Psoas muscle (tissue), 8 donors: ENCODE measurements at regions of chr20 and their contacts with region 1.

Region 1: GRCh38 chr20:7171911-7172310 is 404.4 kb downstream of the BMP2 start:
- DNase-seq: no peak
- ATAC-seq: no peak
- H3K4me3 ChIP-seq: no peak overlapping the region
- H3K27ac ChIP-seq: no peak overlapping the region
- H3K4me1 ChIP-seq: no peaks in the 10 kb centered on the region
- H3K27me3 ChIP-seq: no peaks in the 10 kb centered on the region
- CTCF ChIP-seq: no peak

Region 2: GRCh38 chr20:7505152-7505834 is 333.4 kb after region 1 on chr20:
- intact Hi-C with region 1: loop called in 1 of 2 experiments (anchors 5 kb)
- DNase-seq: no peak
- ATAC-seq: no peak
- H3K4me3 ChIP-seq: no peak overlapping the region
- H3K27ac ChIP-seq: no peak overlapping the region
- H3K4me1 ChIP-seq: no peaks in the 10 kb centered on the region
- H3K27me3 ChIP-seq: no peaks in the 10 kb centered on the region
- CTCF ChIP-seq: no peak

Region 3: DNA sequence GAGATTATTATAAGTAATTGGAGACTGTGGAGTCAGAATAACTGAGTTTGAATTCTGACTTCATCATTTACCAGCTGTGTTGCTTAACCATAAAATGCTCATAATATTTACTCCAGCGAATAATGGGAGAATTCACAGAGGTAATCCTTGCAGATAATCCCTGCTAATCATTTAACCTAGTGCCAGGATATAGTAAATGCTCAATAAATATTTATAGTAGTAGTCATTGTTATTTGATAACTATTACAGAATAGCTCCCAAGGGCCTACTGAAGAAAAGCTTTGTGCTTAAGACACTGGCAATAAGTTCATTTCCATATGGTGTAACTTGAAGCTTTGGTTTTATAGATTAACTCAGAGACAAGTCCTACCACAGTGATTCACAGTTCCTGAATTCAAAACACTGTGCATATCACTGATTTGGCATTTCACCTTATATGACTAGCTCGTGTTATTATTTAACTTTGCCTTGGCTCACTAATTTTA is 1688.1 kb after region 1 on chr20:
- intact Hi-C with region 1: no loop called
- DNase-seq: no peak
- ATAC-seq: no peak
- H3K4me3 ChIP-seq: no peak overlapping the region
- H3K27ac ChIP-seq: no peak overlapping the region
- H3K4me1 ChIP-seq: no peaks in the 10 kb centered on the region
- H3K27me3 ChIP-seq: no peaks in the 10 kb centered on the region
- CTCF ChIP-seq: no peak